Activated B cell treated with CpG ODN at 0.5 μM for 24 hours (primary cell): ENCODE measurements at regions of chr2 and their contacts with region 1.

Region 1: DNA sequence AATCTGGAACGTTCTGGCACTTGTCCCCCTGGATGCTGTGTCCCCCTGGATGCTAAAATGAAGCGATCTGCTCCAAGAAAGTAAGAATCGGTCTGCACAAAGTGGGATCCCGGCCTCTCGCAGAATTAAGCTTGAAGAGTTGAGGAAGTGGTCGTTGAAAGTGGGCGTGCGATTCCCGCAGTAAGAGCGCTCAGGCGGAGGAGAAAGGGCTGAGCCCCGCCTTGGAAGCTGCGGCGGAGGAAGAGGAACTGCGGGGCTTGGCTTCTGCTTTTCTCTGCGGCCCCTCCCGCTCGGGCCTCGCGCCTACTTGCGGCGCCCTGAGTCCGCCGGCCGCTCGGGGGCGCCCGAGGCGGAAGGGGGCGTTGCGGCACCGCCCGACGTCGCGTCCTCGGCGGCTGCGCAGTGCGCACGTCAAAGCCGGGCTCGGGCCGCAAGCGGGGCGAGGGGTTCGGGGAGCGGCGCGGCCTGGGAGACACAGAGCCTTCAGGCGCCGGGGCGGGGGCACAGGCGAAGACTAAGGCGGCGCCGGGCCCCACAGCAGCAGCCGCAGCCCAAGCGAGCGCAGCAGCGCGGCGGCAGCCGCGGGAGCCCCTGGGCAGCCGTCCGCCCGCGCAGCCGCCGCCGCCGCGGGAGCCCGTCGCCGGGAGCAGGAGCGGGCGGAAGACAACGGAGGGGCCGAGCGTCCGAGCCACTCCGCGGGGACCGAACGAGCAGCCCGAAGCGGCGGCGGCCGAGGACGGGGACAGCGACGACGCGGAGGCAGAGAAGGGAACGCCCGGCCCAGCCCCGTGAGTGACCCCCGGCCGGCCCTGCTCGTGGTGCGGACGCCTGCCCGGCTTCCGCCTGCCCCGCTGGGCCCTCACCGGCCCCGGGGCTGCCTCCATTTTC is at the start of gene CAB39:
- DNase-seq: peak; percentile 95
- ATAC-seq: peak; percentile 91
- H3K4me3 Mint-ChIP-seq: peak within 1 kb of the TSS; percentile 94
- H3K27ac Mint-ChIP-seq: peak within 1 kb of the TSS; percentile 93
- H3K4me1 Mint-ChIP-seq: peaks cover 48% of the 10 kb centered on the region
- H3K27me3 Mint-ChIP-seq: no peaks in the 10 kb centered on the region
- CTCF ChIP-seq: no peak
- total RNA-seq, gene CAB39: 60.1 and 68.6 TPM in 2 replicates

Region 2: DNA sequence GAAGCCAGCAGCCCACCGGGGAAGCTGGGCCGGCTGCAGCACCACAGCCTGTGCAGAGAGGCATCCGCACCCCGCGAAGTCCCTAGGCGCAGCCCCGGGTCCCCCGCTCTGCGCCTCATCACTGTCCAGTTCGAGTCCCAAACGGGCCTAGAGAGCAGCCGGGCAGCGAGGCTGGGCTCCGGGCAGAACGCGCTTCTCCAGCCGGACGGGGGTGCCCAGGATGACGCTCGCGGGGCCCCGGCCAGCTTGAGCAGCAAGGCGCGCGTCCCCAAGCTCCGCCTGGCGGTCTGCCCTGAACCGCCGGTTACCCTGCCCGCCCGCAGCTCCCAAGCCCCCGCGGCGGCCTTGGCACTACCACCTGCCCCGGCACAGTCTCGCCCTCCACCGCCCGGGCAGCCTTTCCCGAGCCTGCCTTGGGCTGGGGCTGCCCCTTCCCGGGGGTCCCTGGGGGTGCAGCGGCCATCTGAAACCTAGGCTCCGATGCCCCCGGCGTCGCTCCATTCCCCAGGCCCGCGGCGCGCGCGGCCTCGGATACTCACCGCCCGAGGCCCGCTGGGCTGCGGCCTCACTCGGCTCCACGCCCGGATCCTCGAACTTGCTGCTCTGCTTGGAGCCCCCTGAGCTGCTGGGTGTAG is 644.6 kb before region 1 on chr2:
- CTCF ChIA-PET with region 1: interaction called, 6 read pairs
- POLR2A ChIA-PET with region 1: no interaction called
- intact Hi-C with region 1: loop called (anchors 1 kb)
- DNase-seq: peak; percentile 58
- ATAC-seq: peak; percentile 32
- H3K4me3 Mint-ChIP-seq: peak overlapping the region; percentile 90
- H3K27ac Mint-ChIP-seq: peak overlapping the region; percentile 70
- H3K4me1 Mint-ChIP-seq: peaks cover 18% of the 10 kb centered on the region
- H3K27me3 Mint-ChIP-seq: peaks cover 5% of the 10 kb centered on the region
- CTCF ChIP-seq: no peak

Region 3: GRCh38 chr2:230268606-230269243 is 444.0 kb before region 1 on chr2:
- CTCF ChIA-PET with region 1: no interaction called
- POLR2A ChIA-PET with region 1: no interaction called
- intact Hi-C with region 1: loop called (anchors 5 kb)
- DNase-seq: no peak
- ATAC-seq: no peak
- H3K4me3 Mint-ChIP-seq: peak overlapping the region; percentile 60
- H3K27ac Mint-ChIP-seq: peak overlapping the region; percentile 92
- H3K4me1 Mint-ChIP-seq: peaks cover 81% of the 10 kb centered on the region
- H3K27me3 Mint-ChIP-seq: no peaks in the 10 kb centered on the region
- CTCF ChIP-seq: no peak

Region 4: GRCh38 chr2:230643576-230644291 is 69.0 kb before region 1 on chr2:
- CTCF ChIA-PET with region 1: no interaction called
- POLR2A ChIA-PET with region 1: interaction called, 4 read pairs
- intact Hi-C with region 1: loop called (anchors 5 kb)
- DNase-seq: no peak
- ATAC-seq: peak; percentile 47
- H3K4me3 Mint-ChIP-seq: peak overlapping the region; percentile 16
- H3K27ac Mint-ChIP-seq: peak overlapping the region; percentile 73
- H3K4me1 Mint-ChIP-seq: peaks cover 23% of the 10 kb centered on the region
- H3K27me3 Mint-ChIP-seq: no peaks in the 10 kb centered on the region
- CTCF ChIP-seq: no peak

Region 5: GRCh38 chr2:230694241-230694640 is 18.4 kb before region 1 on chr2:
- CTCF ChIA-PET with region 1: no interaction called
- POLR2A ChIA-PET with region 1: no interaction called
- intact Hi-C with region 1: no loop called
- DNase-seq: no peak
- ATAC-seq: no peak
- H3K4me3 Mint-ChIP-seq: no peak overlapping the region
- H3K27ac Mint-ChIP-seq: no peak overlapping the region
- H3K4me1 Mint-ChIP-seq: no peaks in the 10 kb centered on the region
- H3K27me3 Mint-ChIP-seq: no peaks in the 10 kb centered on the region
- CTCF ChIP-seq: no peak

Region 6: DNA sequence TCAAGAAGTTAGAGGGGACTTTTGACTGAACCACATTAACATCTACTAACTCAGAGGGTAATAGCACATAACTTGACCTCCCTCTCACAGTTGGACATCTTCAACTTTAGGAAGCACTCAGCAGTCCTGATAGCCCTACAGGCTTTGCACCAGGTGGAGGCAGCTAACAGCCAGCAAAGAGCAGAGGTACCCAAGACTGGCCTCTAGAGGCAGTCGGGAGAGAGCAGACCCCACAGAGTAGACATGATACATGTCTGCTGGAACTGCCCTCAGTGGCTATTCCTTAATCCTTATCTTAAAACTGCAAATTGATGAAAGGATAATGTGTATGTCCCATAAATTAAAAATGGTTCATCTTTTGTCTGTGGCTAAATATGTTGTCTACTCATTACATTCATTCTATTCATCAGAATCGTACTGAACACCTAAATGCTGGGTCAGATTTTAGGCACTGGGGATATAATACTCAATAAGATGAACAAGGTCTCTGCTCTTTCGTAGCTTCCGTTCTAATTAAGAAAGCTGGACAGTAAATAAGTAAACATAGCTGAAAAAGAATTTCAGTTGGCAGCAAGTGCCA is 49.7 kb after region 1 on chr2:
- CTCF ChIA-PET with region 1: interaction called, 4 read pairs
- POLR2A ChIA-PET with region 1: no interaction called
- intact Hi-C with region 1: loop called (anchors 5 kb)
- DNase-seq: no peak
- ATAC-seq: peak; percentile 85
- H3K4me3 Mint-ChIP-seq: no peak overlapping the region
- H3K27ac Mint-ChIP-seq: no peak overlapping the region
- H3K4me1 Mint-ChIP-seq: peaks cover 40% of the 10 kb centered on the region
- H3K27me3 Mint-ChIP-seq: no peaks in the 10 kb centered on the region
- CTCF ChIP-seq: no peak

Region 7: DNA sequence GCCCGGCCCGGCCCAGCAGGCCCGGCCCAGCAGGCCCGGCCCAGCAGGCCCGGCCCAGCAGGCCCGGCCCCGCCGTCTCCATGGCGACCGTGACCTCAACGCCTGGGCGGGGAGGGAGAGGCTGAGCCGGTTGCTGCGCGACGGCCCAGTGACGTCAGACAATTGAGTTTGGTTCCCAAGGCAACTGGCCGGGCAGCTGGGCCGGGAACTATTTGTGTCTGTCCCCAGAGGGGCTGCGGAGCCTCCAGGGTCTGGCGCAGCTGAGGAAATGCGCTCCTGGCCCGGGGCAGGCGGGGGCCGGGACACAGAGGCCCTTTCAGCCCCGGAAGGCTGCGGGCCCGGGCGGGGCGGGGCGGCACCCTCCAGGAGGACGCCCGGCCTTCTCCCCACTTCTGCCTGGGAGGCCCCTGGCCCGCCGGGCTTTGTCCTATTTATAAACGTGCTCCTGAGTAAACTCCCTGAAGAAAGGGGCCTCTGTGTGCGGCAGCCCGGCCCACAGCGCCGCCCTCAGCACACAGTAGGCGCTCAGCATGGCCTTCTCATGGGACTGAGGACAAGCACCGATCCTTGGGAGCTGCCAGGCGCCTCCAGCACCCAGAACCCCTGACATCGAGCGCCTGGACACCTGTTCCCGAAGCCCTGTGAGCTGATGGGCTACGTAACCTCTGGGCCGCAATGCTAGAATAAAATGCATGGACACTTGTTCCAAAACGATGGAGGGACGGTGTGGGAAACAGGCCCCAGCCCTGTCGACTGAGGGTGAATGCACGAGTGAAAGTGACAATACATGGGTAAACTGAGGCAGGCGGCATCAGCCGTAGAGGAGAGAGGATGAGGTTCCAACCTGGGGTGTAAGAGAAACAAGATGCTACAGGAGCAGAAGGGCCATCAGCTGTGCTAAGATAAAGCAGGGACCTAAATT is 892.3 kb after region 1 on chr2:
- CTCF ChIA-PET with region 1: no interaction called
- POLR2A ChIA-PET with region 1: no interaction called
- intact Hi-C with region 1: loop called (anchors 5 kb)
- DNase-seq: peak; percentile 99
- ATAC-seq: peak; percentile 88
- H3K4me3 Mint-ChIP-seq: peak overlapping the region; percentile 72
- H3K27ac Mint-ChIP-seq: peak overlapping the region; percentile 87
- H3K4me1 Mint-ChIP-seq: peaks cover 31% of the 10 kb centered on the region
- H3K27me3 Mint-ChIP-seq: no peaks in the 10 kb centered on the region
- CTCF ChIP-seq: no peak